Ascending aorta (tissue), 2 donors: ENCODE measurements at regions of chr6 and their contacts with region 1.

Region 1: DNA sequence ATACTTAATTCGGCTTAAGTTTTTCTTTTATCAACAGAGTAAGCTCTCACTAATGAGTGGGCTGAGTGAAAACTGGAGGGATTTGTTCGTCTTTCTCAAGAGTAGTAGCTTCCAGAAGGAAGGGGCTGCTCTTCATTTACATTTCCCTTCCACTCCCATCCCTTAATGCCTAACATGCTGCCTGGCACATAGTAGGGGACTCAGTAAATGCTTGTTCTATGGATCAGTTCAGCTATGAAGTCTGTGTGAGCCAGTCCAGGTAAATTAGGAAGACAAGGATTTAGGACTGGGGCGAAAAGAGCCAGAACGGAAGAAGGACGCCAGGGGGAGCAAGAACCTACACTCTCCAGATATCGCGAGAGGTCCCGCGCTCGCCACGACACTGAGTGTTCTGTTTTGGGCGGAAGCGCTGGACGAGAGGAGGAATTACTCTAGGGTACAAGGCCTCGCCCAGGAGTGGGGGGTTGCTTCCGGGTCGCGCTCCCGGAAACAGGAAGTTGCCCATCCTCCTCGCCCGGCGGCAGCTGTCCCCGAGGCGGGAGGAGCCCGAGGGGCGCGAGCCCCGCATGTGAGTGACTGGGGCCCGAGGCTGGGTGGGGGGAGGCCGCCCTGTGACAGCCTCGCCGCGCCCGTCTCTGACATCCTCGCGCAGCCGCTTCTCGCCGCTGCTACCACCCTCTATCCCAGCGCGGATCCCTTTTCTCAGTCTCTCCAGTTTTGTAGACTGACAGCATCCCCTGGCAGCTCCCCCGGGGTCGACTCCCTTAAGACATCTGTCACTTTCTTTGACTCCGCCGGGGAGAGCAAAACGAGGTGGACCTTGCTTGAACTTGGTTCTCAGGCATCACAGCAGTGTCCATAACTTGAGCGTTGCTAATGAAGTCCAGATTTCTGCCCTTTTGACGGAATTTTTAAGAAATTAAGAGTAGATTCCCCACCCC is at the start of gene C6orf89:
- DNase-seq: peak; percentile 93 to 99
- H3K4me3 ChIP-seq: peak within 1 kb of the TSS; percentile 85 to 90
- H3K27ac ChIP-seq: peak within 1 kb of the TSS; percentile 89 to 91
- H3K4me1 ChIP-seq: peaks cover 0 to 14% of the 10 kb centered on the region in 2 donors
- H3K27me3 ChIP-seq: no peaks in the 10 kb centered on the region
- CTCF ChIP-seq: peak; percentile 76 to 93 (median 84)
- total RNA-seq, gene C6orf89: 21.6 TPM

Region 2: DNA sequence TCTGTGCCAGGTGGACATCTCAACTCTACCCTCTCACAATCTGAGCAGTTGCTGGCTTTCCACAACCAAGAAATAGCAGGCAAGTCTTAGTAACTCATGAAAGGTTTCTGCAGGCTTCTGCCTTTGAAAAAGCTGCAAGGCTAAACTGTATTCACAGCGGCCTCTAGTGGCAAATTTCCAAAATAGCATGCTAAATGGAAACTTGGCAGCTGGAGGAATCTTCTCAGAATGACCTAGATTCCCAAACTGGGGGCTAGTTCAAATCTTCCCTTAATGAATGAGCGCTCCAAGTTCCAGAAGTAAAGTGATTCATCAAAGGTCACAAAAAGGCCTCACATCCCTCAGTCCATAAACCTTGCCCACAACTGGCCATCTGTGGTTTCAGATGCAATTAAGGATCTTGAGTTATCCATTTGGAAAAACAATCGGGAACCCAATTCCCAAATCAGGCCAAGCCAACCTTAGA is 34.5 kb before region 1 on chr6:
- intact Hi-C with region 1: no loop called
- DNase-seq: peak in 1 of 2 donors; percentile 82
- H3K4me3 ChIP-seq: no peak overlapping the region
- H3K27ac ChIP-seq: peak overlapping the region; percentile 77 to 89
- H3K4me1 ChIP-seq: peaks cover 0 to 22% of the 10 kb centered on the region in 2 donors
- H3K27me3 ChIP-seq: no peaks in the 10 kb centered on the region
- CTCF ChIP-seq: peak; percentile 52 to 77 (median 72)

Region 3: DNA sequence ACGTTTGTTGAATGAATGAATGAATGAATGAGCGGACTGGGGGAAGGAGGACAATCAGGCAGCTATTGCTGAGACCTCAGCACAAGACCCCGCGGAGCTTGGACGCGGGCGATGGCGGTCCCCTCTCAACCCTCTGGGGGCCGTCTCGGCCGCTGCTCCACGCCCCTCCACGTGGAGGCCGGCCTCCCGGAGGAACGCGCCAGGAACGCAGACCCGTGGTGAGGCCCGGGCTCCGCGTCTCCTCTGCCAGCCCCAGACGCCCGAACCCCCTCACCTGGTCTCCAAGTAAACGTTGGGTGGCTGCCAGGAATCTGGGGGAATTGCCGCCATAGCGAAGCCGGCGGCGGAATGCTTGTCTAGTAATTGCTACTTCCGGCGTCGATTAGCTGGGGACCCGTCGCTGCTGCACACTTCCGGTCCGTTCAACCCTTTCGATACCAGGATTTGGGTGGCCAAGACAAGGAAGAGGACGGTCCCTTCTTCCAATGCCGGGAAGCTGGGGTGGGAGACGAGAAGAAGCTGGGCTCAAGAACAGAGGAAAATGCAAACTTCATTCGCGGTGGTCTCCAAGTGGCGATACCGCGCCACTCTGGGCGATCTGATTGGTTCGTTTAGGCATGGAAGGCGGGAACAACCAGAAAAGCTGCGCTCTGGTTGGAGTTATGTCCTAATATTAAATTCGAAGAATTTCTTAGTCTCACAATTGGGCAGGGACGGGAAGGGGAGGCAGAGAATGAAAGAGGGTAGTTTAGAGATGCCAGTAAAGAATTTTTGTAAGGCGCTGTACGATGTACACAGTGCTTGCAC is 11.1 kb before region 1 on chr6 and contains the start of gene PPIL1:
- intact Hi-C with region 1: loop called (anchors 1 kb)
- DNase-seq: peak; percentile 29 to 90
- H3K4me3 ChIP-seq: peak within 1 kb of the TSS; percentile 78 to 86
- H3K27ac ChIP-seq: peak within 1 kb of the TSS; percentile 91
- H3K4me1 ChIP-seq: peaks cover 4 to 9% of the 10 kb centered on the region in 2 donors
- H3K27me3 ChIP-seq: no peaks in the 10 kb centered on the region
- CTCF ChIP-seq: no peak
- total RNA-seq, gene PPIL1: 24.2 TPM